H1 (cell line): ENCODE measurements at regions of chr15 and their contacts with region 1.

Region 1: DNA sequence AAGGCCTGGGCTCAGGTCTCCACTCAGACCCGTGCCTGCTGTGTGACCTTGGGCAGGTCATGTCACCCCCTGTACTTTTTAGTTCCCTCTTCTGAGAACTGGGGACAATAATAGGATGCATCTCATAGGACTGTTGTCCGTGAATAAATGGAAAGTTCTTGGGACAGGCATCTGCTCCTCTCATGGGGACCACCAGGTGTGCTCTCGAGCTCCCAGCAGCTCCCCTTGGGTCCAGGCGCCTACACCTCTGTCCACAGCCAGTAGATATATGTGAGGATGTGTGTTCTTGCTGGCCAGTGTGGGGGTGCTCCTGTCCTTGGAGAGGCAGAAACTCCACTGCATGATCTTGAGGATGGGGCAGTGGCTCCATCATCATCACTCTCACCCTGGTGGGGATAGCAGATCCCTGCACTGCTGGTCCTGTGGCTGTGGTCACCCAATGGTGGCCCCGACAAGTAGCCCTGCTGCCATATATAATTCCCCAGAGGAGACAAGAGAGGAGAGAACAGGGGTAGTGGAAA is 257.6 kb upstream of the TLE3 start:
- DNase-seq: no peak
- H3K4me3 ChIP-seq: no peak overlapping the region
- H3K27ac ChIP-seq: no peak overlapping the region
- H3K4me1 ChIP-seq: no peaks in the 10 kb centered on the region
- H3K27me3 ChIP-seq: no peaks in the 10 kb centered on the region
- CTCF ChIP-seq: peak; percentile 21 to 35 (median 27); a peak in 3 of 4 replicates
- EP300 ChIP-seq: no peak
- POLR2A ChIP-seq: no peak
- RAD21 ChIP-seq: peak; percentile 18 to 40; a peak in 3 of 4 replicates

Region 2: DNA sequence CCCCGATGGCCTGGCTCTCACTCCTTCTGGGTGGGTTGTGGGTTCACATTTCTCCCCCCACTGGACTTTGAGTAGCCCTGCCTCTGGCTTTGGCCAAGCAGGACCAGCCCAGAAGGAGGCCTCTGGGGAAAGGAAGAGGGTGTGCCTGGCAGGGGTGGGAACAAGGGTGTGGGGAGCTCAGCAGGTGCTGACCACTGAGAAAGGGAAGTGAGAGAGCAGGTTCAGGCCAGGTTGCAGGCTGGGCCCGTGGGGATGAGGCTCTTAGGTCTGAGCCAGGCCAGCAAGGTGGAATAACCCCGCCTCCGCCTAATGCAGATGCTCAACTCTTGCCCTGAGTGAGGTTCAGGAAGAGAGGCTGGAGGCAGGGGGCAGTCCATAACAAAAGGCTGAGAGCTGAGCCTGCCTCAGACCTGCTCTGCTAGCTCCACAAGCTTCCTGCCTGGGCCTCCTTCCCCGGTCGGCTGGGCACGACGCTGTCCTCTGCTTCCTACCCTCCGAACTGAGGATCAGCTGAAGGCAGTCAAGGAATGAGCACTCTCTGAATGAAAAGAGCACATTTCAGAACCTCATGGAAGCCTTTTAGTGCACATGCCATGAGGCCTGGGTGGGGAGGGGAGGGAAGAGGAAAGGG is 340.4 kb before region 1 on chr15:
- CTCF ChIA-PET with region 1: no interaction called
- POLR2A ChIA-PET with region 1: no interaction called
- DNase-seq: peak; percentile 51 to 69
- H3K4me3 ChIP-seq: no peak overlapping the region
- H3K27ac ChIP-seq: no peak overlapping the region
- H3K4me1 ChIP-seq: peaks cover 0 to 22% (median 16%) of the 10 kb centered on the region in 4 experiments; a peak in 6 of 7 replicates
- H3K27me3 ChIP-seq: peaks cover 0 to 2% (median 0%) of the 10 kb centered on the region in 4 experiments; a peak in 2 of 7 replicates
- CTCF ChIP-seq: peak in 1 of 3 experiments; percentile 23; a peak in 1 of 4 replicates
- EP300 ChIP-seq: no peak
- POLR2A ChIP-seq: 0 out of 3 replicates have a peak, but pooled peaks of 1 of the 2 experiments have one; percentile 52
- RAD21 ChIP-seq: peak in 1 of 2 experiments; percentile 49; a peak in 2 of 4 replicates

Region 3: GRCh38 chr15:70259028-70259424 is 96.3 kb before region 1 on chr15:
- CTCF ChIA-PET with region 1: interaction called, 10 read pairs
- POLR2A ChIA-PET with region 1: no interaction called
- DNase-seq: no peak
- H3K4me3 ChIP-seq: no peak overlapping the region
- H3K27ac ChIP-seq: no peak overlapping the region
- H3K4me1 ChIP-seq: peaks cover 0 to 3% (median 1%) of the 10 kb centered on the region in 4 experiments; a peak in 4 of 7 replicates
- H3K27me3 ChIP-seq: no peaks in the 10 kb centered on the region
- CTCF ChIP-seq: no peak
- EP300 ChIP-seq: no peak
- POLR2A ChIP-seq: no peak
- RAD21 ChIP-seq: no peak

Region 4: DNA sequence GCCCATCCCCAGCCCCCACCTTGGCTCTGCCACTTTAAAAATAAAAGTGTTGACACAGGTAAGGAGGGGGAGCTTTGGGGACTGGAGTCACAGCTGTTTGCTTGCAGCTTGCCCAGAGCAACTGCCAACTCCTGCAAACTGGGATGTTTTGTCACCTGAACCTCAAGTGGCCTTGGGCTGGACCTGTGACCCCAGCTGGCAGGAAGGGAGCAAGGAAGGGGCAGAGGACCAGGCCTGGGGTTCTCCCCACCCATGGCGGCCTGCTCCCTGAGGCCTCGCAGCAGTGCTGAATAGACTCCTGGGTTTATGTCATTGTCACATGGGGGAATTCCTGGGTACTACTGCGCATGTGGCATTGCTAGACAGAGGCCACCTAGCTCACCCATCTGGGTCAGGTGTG is 10.7 kb before region 1 on chr15:
- CTCF ChIA-PET with region 1: interaction called, 12 read pairs
- POLR2A ChIA-PET with region 1: no interaction called
- DNase-seq: peak in 1 of 2 experiments; percentile 28
- H3K4me3 ChIP-seq: no peak overlapping the region
- H3K27ac ChIP-seq: no peak overlapping the region
- H3K4me1 ChIP-seq: peaks cover 0 to 3% (median 0%) of the 10 kb centered on the region in 4 experiments; a peak in 1 of 7 replicates
- H3K27me3 ChIP-seq: no peaks in the 10 kb centered on the region
- CTCF ChIP-seq: no peak
- EP300 ChIP-seq: no peak
- POLR2A ChIP-seq: no peak
- RAD21 ChIP-seq: no peak

Region 5: DNA sequence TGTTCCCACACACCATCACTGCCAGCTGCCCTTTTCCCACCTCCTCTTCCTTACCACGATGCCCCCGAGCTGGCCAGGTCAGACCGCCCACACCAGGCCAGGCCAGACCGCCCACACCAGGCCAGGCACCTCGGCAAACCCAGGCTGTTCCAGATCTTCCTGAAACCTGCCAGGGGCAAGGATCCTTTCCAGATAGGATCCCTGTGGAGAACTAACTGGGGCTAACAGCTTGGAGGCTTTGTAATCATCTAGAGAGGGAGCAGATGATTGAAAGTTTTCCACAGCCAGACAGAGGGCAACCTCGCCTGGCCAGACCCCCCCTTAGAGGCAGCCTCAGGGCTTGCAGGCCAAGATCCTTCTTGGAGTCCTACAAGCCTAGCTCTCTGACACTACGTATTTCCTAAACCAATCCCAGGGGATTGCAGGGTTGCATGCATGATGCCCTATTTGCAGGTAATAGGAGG is 29.8 kb after region 1 on chr15:
- CTCF ChIA-PET with region 1: no interaction called
- POLR2A ChIA-PET with region 1: no interaction called
- DNase-seq: no peak
- H3K4me3 ChIP-seq: no peak overlapping the region
- H3K27ac ChIP-seq: no peak overlapping the region
- H3K4me1 ChIP-seq: peaks cover 0 to 7% (median 3%) of the 10 kb centered on the region in 4 experiments; a peak in 5 of 7 replicates
- H3K27me3 ChIP-seq: no peaks in the 10 kb centered on the region
- CTCF ChIP-seq: no peak
- EP300 ChIP-seq: no peak
- POLR2A ChIP-seq: no peak
- RAD21 ChIP-seq: no peak

Region 6: DNA sequence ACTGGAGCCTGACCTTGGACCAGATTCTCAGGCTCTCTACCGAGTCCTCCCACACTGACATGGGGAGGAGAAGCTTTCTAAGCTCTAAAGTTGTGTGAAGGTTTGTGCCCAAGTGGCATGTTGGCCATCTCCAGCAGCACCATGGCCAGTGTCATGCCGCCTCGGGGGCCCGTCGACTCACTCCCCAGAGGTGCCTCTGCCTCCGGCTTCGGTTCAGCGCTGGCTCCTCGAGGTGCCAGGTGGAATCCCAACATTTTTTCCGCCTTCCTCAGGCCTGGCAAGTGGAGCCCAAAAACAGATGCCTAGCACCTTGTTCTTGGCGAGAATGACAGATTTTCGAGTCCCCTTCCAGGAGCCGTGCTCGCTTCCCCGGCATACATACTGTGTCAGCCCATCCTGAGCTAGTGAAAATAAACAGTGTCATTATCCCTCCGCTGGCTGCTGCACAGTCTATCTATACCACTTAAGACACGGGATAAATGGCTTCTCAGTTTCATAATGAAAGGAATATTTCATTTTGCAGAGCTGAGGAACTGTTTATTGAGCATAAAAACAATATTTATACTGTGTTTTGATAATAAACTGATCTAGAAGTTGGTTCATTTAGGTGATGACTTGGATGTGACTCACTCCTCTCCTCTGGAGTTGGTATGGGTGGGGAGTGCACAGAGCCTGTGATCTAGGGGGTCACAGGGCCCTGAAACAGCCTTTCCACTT is 70.9 kb after region 1 on chr15:
- CTCF ChIA-PET with region 1: no interaction called
- POLR2A ChIA-PET with region 1: no interaction called
- DNase-seq: no peak
- H3K4me3 ChIP-seq: no peak overlapping the region
- H3K27ac ChIP-seq: no peak overlapping the region
- H3K4me1 ChIP-seq: peaks cover 0 to 7% (median 3%) of the 10 kb centered on the region in 4 experiments; a peak in 2 of 7 replicates
- H3K27me3 ChIP-seq: no peaks in the 10 kb centered on the region; a peak in 1 of 7 replicates
- CTCF ChIP-seq: no peak
- EP300 ChIP-seq: no peak
- POLR2A ChIP-seq: no peak
- RAD21 ChIP-seq: no peak